Mammary epithelial cell (primary cell): ENCODE measurements at regions of chr15 and their contacts with region 1.

Region 1: GRCh38 chr15:32657198-32657883 is 15.8 kb downstream of the SCG5 start:
- DNase-seq: peak; percentile 69
- H3K4me3 ChIP-seq: no peak overlapping the region
- H3K27ac ChIP-seq: no peak overlapping the region
- H3K4me1 ChIP-seq: peaks cover 49% of the 10 kb centered on the region
- H3K27me3 ChIP-seq: no peaks in the 10 kb centered on the region
- CTCF ChIP-seq: peak; percentile 19 to 56

Region 2: GRCh38 chr15:32717426-32718226 is 60.3 kb after region 1 on chr15 and contains the start of gene GREM1:
- CTCF ChIA-PET with region 1: no interaction called
- dilution Hi-C with region 1: no loop called
- in situ Hi-C with region 1: no loop called
- intact Hi-C with region 1: loop called (anchors 5 kb)
- DNase-seq: no peak
- H3K4me3 ChIP-seq: peak within 1 kb of the TSS; percentile 15 to 41 (median 29)
- H3K27ac ChIP-seq: no peak within 1 kb of the TSS
- H3K4me1 ChIP-seq: peaks cover 17% of the 10 kb centered on the region
- H3K27me3 ChIP-seq: peaks cover 38% of the 10 kb centered on the region
- CTCF ChIP-seq: no peak
- total RNA-seq, gene GREM1: 1.8 TPM in 1 of 2 donors, not detected in the other

Region 3: GRCh38 chr15:32844118-32844711 is 186.9 kb after region 1 on chr15:
- CTCF ChIA-PET with region 1: interaction called, 3 read pairs
- dilution Hi-C with region 1: loop called (anchors 5 kb)
- in situ Hi-C with region 1: loop called in 1 of 2 experiments (anchors 10 kb)
- intact Hi-C with region 1: loop called (anchors 1 kb)
- DNase-seq: peak; percentile 14
- H3K4me3 ChIP-seq: no peak overlapping the region
- H3K27ac ChIP-seq: no peak overlapping the region
- H3K4me1 ChIP-seq: no peaks in the 10 kb centered on the region
- H3K27me3 ChIP-seq: no peaks in the 10 kb centered on the region
- CTCF ChIP-seq: peak; percentile 63 to 76

Region 4: GRCh38 chr15:32936283-32936918 is 279.1 kb after region 1 on chr15:
- CTCF ChIA-PET with region 1: interaction called, 4 read pairs
- dilution Hi-C with region 1: no loop called
- in situ Hi-C with region 1: no loop called
- intact Hi-C with region 1: loop called (anchors 1 kb)
- DNase-seq: peak; percentile 11
- H3K4me3 ChIP-seq: no peak overlapping the region
- H3K27ac ChIP-seq: no peak overlapping the region
- H3K4me1 ChIP-seq: no peaks in the 10 kb centered on the region
- H3K27me3 ChIP-seq: no peaks in the 10 kb centered on the region
- CTCF ChIP-seq: peak; percentile 73 to 74

Region 5: GRCh38 chr15:32956006-32956405 is 298.7 kb after region 1 on chr15:
- CTCF ChIA-PET with region 1: no interaction called
- dilution Hi-C with region 1: no loop called
- in situ Hi-C with region 1: loop called in 1 of 2 experiments (anchors 10 kb)
- intact Hi-C with region 1: loop called (anchors 1 kb)
- DNase-seq: peak; percentile 25
- H3K4me3 ChIP-seq: no peak overlapping the region
- H3K27ac ChIP-seq: no peak overlapping the region
- H3K4me1 ChIP-seq: no peaks in the 10 kb centered on the region
- H3K27me3 ChIP-seq: no peaks in the 10 kb centered on the region
- CTCF ChIP-seq: peak; percentile 54 to 75

Region 6: GRCh38 chr15:32994810-32995424 is 337.6 kb after region 1 on chr15:
- CTCF ChIA-PET with region 1: no interaction called
- dilution Hi-C with region 1: no loop called
- in situ Hi-C with region 1: loop called (anchors 5 kb)
- intact Hi-C with region 1: loop called (anchors 1 kb)
- DNase-seq: no peak
- H3K4me3 ChIP-seq: no peak overlapping the region
- H3K27ac ChIP-seq: no peak overlapping the region
- H3K4me1 ChIP-seq: no peaks in the 10 kb centered on the region
- H3K27me3 ChIP-seq: no peaks in the 10 kb centered on the region
- CTCF ChIP-seq: peak; percentile 56 to 67

Region 7: DNA sequence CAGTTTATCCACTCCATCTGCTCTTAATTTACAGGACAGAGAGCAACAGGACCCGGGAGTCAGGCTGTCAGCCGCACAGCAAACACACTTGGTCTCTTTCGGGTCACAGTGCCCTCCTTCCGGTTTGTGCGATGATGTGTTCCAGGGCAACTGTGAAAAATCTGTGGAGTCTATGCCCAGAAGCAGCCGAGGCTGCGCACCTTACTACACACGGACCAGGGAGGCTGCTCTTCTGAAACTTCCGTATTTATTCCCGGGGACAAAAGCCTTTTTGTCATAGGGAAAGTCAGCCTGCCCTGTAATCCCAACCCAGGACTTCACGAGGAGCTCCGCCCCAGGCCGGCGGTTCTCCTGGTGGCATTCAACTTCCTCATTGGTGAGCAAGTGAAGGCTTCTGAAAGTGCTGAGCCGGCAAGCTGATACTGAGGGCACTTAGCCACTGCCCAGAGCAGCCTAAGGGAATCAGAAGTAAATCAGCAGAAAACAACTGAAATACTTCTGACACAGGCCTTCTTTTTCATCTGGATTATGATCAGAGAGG is 410.7 kb after region 1 on chr15:
- CTCF ChIA-PET with region 1: no interaction called
- dilution Hi-C with region 1: no loop called
- in situ Hi-C with region 1: no loop called
- intact Hi-C with region 1: loop called (anchors 5 kb)
- DNase-seq: peak; percentile 73
- H3K4me3 ChIP-seq: peak overlapping the region; percentile 8 to 23 (median 9)
- H3K27ac ChIP-seq: peak overlapping the region; percentile 84
- H3K4me1 ChIP-seq: peaks cover 33% of the 10 kb centered on the region
- H3K27me3 ChIP-seq: no peaks in the 10 kb centered on the region
- CTCF ChIP-seq: no peak